PC-3 (cell line): ENCODE measurements at regions of chr10 and their contacts with region 1.

Region 1: GRCh38 chr10:74947781-74948401 is 121.5 kb downstream of the KAT6B start:
- DNase-seq: peak; percentile 99
- ATAC-seq: peak; percentile 87
- H3K4me3 ChIP-seq: no peak overlapping the region; the same call in 1 of the 2 replicates
- H3K27ac ChIP-seq: peak overlapping the region; percentile 54
- H3K4me1 ChIP-seq: peaks cover 43% of the 10 kb centered on the region
- H3K27me3 ChIP-seq: no peaks in the 10 kb centered on the region
- CTCF ChIP-seq: no peak

Region 2: DNA sequence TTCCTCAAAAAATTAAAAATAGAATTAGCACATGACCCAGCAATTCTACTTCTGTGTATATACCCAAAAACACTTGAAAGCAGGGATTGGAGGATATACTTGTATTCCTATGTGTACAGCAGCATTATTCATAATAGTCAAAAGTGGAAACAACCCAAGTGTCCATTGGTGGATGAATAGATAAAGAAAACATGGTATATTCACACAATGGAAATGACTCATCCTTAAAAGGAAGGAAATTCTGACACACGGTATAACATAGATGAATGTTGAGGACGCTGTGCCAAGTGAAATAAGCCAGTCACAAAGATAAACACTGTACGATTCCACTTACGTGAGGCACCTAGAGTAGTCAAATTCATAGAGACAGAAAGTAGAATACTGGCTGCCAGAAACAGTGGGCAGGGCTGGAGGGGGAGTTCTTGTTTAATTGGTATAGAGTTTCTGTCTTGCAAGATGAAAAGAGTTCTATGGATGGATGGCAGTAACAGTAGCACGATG is 148.1 kb before region 1 on chr10:
- CTCF ChIA-PET with region 1: no interaction called
- POLR2A ChIA-PET with region 1: no interaction called
- intact Hi-C with region 1: loop called (anchors 1 kb)
- DNase-seq: peak; percentile 100
- ATAC-seq: peak; percentile 97
- H3K4me3 ChIP-seq: peak overlapping the region; percentile 3; the same call in 1 of the 2 replicates
- H3K27ac ChIP-seq: peak overlapping the region; percentile 67
- H3K4me1 ChIP-seq: peaks cover 8% of the 10 kb centered on the region
- H3K27me3 ChIP-seq: no peaks in the 10 kb centered on the region
- CTCF ChIP-seq: no peak

Region 3: GRCh38 chr10:74981831-74982633 is 34.1 kb after region 1 on chr10:
- CTCF ChIA-PET with region 1: no interaction called
- POLR2A ChIA-PET with region 1: interaction called, 11 read pairs
- intact Hi-C with region 1: no loop called
- DNase-seq: no peak
- ATAC-seq: no peak; the same call in 1 of the 2 replicates
- H3K4me3 ChIP-seq: no peak overlapping the region
- H3K27ac ChIP-seq: no peak overlapping the region
- H3K4me1 ChIP-seq: no peaks in the 10 kb centered on the region
- H3K27me3 ChIP-seq: no peaks in the 10 kb centered on the region
- CTCF ChIP-seq: peak; percentile 36; the same call in 1 of the 2 replicates